Caco-2 (cell line): ENCODE measurements at regions of chr3 and their contacts with region 1.

Region 1: GRCh38 chr3:14178247-14179113 is at the starts of genes LSM3 and XPC:
- DNase-seq: peak; percentile 97 to 98
- H3K4me3 ChIP-seq: peak within 1 kb of the TSS; percentile 95
- H3K4me3 Mint-ChIP-seq: peak within 1 kb of the TSS; percentile 82
- H3K27ac Mint-ChIP-seq: peak within 1 kb of the TSS; percentile 94
- H3K4me1 ChIP-seq: peaks cover 16% of the 10 kb centered on the region
- H3K4me1 Mint-ChIP-seq: peaks cover 24% of the 10 kb centered on the region
- H3K27me3 ChIP-seq: no peaks in the 10 kb centered on the region
- H3K27me3 Mint-ChIP-seq: no peaks in the 10 kb centered on the region
- CTCF ChIP-seq: no peak
- total RNA-seq, gene LSM3: 19.1 and 20.5 TPM in 2 replicates
- total RNA-seq, gene XPC: 31.0 and 33.1 TPM in 2 replicates

Region 2: GRCh38 chr3:13972679-13973379 is 205.7 kb before region 1 on chr3:
- CTCF ChIA-PET with region 1: no interaction called
- POLR2A ChIA-PET with region 1: no interaction called
- intact Hi-C with region 1: no loop called
- DNase-seq: peak in 1 of 2 experiments; percentile 3
- H3K4me3 ChIP-seq: no peak overlapping the region
- H3K4me3 Mint-ChIP-seq: no peak overlapping the region
- H3K27ac Mint-ChIP-seq: no peak overlapping the region
- H3K4me1 ChIP-seq: no peaks in the 10 kb centered on the region
- H3K4me1 Mint-ChIP-seq: no peaks in the 10 kb centered on the region
- H3K27me3 ChIP-seq: no peaks in the 10 kb centered on the region
- H3K27me3 Mint-ChIP-seq: no peaks in the 10 kb centered on the region
- CTCF ChIP-seq: no peak

Region 3: GRCh38 chr3:14124615-14125190 is 53.8 kb before region 1 on chr3 and contains the starts of genes CHCHD4 and TMEM43:
- CTCF ChIA-PET with region 1: no interaction called
- POLR2A ChIA-PET with region 1: interaction called, 38 read pairs
- intact Hi-C with region 1: loop called (anchors 1 kb)
- DNase-seq: peak; percentile 97 to 99
- H3K4me3 ChIP-seq: peak within 1 kb of the TSS; percentile 95
- H3K4me3 Mint-ChIP-seq: peak within 1 kb of the TSS; percentile 91
- H3K27ac Mint-ChIP-seq: peak within 1 kb of the TSS; percentile 94
- H3K4me1 ChIP-seq: peaks cover 12% of the 10 kb centered on the region; the same call in 1 of the 2 replicates
- H3K4me1 Mint-ChIP-seq: peaks cover 18% of the 10 kb centered on the region
- H3K27me3 ChIP-seq: no peaks in the 10 kb centered on the region
- H3K27me3 Mint-ChIP-seq: no peaks in the 10 kb centered on the region
- CTCF ChIP-seq: no peak
- total RNA-seq, gene CHCHD4: 15.3 and 15.9 TPM in 2 replicates
- total RNA-seq, gene TMEM43: 33.0 and 35.2 TPM in 2 replicates

Region 4: GRCh38 chr3:14144423-14145075 is 33.9 kb before region 1 on chr3:
- CTCF ChIA-PET with region 1: no interaction called
- POLR2A ChIA-PET with region 1: interaction called, 20 read pairs
- intact Hi-C with region 1: loop called (anchors 1 kb)
- DNase-seq: peak; percentile 77 to 85
- H3K4me3 ChIP-seq: no peak overlapping the region
- H3K4me3 Mint-ChIP-seq: peak overlapping the region; percentile 47
- H3K27ac Mint-ChIP-seq: peak overlapping the region; percentile 93
- H3K4me1 ChIP-seq: peaks cover 26% of the 10 kb centered on the region
- H3K4me1 Mint-ChIP-seq: peaks cover 14% of the 10 kb centered on the region
- H3K27me3 ChIP-seq: no peaks in the 10 kb centered on the region
- H3K27me3 Mint-ChIP-seq: no peaks in the 10 kb centered on the region
- CTCF ChIP-seq: no peak

Region 5: GRCh38 chr3:14222900-14223594 is 44.6 kb after region 1 on chr3:
- CTCF ChIA-PET with region 1: interaction called, 4 read pairs
- POLR2A ChIA-PET with region 1: interaction called, 12 read pairs
- intact Hi-C with region 1: loop called (anchors 2 kb)
- DNase-seq: no peak
- H3K4me3 ChIP-seq: no peak overlapping the region
- H3K4me3 Mint-ChIP-seq: peak overlapping the region; percentile 15
- H3K27ac Mint-ChIP-seq: peak overlapping the region; percentile 96
- H3K4me1 ChIP-seq: peaks cover 50% of the 10 kb centered on the region
- H3K4me1 Mint-ChIP-seq: peaks cover 47% of the 10 kb centered on the region
- H3K27me3 ChIP-seq: no peaks in the 10 kb centered on the region
- H3K27me3 Mint-ChIP-seq: no peaks in the 10 kb centered on the region
- CTCF ChIP-seq: no peak

Region 6: DNA sequence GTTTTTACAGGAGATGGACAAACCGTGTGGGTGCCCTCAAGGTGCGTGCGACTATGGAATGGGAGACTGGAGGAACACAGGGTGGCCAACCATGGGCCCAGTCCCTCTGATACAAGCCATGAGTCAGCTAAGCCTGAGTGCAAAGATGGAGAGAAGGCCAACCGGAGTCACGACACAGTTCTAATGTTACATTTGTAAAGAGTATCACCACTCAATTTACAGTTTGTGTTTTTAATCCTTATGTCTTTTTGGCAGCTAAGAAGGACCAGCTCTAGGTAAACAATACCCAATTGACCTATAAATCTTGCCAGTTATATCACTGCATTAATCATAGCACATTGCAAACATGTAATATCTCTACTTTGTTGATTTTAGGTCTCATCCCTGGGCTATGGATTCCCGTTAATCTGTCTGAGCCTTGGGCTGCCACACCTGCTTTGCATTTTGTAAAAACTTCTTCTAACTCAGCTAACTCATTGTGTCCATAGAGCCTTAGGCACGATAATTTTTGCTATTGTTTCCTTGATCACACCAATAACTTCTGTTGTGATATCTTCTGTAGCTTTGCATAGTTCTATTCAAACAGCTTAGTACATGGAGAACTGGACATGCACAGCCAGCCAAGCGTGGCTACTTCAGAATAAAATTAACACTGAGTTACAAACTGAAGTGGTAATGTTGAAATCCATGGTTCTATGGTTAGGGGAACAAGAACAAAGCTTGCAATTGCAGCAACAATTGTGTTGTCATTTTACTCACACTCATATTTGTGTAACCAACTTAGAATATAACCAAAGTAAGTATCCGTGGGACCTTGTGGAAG is 50.4 kb after region 1 on chr3:
- CTCF ChIA-PET with region 1: interaction called, 4 read pairs
- POLR2A ChIA-PET with region 1: interaction called, 12 read pairs
- intact Hi-C with region 1: loop called (anchors 2 kb)
- DNase-seq: no peak
- H3K4me3 ChIP-seq: no peak overlapping the region
- H3K4me3 Mint-ChIP-seq: peak overlapping the region; percentile 81
- H3K27ac Mint-ChIP-seq: peak overlapping the region; percentile 96
- H3K4me1 ChIP-seq: peaks cover 83% of the 10 kb centered on the region
- H3K4me1 Mint-ChIP-seq: peaks cover 80% of the 10 kb centered on the region
- H3K27me3 ChIP-seq: no peaks in the 10 kb centered on the region
- H3K27me3 Mint-ChIP-seq: no peaks in the 10 kb centered on the region
- CTCF ChIP-seq: no peak

Region 7: GRCh38 chr3:14497321-14497720 is 318.8 kb after region 1 on chr3:
- CTCF ChIA-PET with region 1: no interaction called
- POLR2A ChIA-PET with region 1: no interaction called
- intact Hi-C with region 1: no loop called
- DNase-seq: no peak
- H3K4me3 ChIP-seq: no peak overlapping the region
- H3K4me3 Mint-ChIP-seq: no peak overlapping the region
- H3K27ac Mint-ChIP-seq: no peak overlapping the region
- H3K4me1 ChIP-seq: peaks cover 8% of the 10 kb centered on the region
- H3K4me1 Mint-ChIP-seq: peaks cover 11% of the 10 kb centered on the region
- H3K27me3 ChIP-seq: no peaks in the 10 kb centered on the region
- H3K27me3 Mint-ChIP-seq: no peaks in the 10 kb centered on the region
- CTCF ChIP-seq: no peak

Region 8: GRCh38 chr3:14651440-14652251 is 473.2 kb after region 1 on chr3 and contains the start of gene CCDC174:
- CTCF ChIA-PET with region 1: no interaction called
- POLR2A ChIA-PET with region 1: interaction called, 4 read pairs
- intact Hi-C with region 1: loop called (anchors 1 kb)
- DNase-seq: peak; percentile 96 to 97
- H3K4me3 ChIP-seq: peak within 1 kb of the TSS; percentile 70
- H3K4me3 Mint-ChIP-seq: peak within 1 kb of the TSS; percentile 87
- H3K27ac Mint-ChIP-seq: peak within 1 kb of the TSS; percentile 93
- H3K4me1 ChIP-seq: peaks cover 22% of the 10 kb centered on the region
- H3K4me1 Mint-ChIP-seq: peaks cover 15% of the 10 kb centered on the region
- H3K27me3 ChIP-seq: no peaks in the 10 kb centered on the region
- H3K27me3 Mint-ChIP-seq: no peaks in the 10 kb centered on the region
- CTCF ChIP-seq: no peak
- total RNA-seq, gene CCDC174: 22.4 and 24.6 TPM in 2 replicates